ENCODE measurements at regions of chr1 and their contacts with region 1.

Region 1: DNA sequence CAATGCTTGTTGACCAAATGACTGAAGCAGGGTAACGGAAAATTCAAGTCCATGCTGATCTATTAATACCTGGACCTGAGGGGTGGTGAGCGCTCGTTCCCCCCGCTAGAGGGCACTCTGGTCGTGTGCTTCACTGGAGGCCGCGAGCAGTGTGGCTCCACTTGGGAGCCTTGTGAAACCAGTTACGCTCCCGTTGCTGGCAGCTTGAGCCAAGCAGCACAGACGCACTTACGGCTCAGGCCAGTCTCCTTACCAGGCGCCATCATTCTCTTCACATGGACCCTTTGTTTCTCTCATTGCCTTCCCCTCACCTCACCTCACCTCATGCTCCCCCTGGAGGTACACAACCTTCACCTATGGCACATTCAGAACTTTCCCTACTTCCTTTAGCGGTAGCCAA is 49.7 kb upstream of the TSPAN2 start:
- DNase-seq: peak; percentile 73
- ATAC-seq: peak; percentile 98
- H3K4me3 Mint-ChIP-seq: no peak overlapping the region
- H3K27ac Mint-ChIP-seq: no peak overlapping the region
- H3K4me1 Mint-ChIP-seq: peaks cover 3% of the 10 kb centered on the region
- H3K27me3 Mint-ChIP-seq: peaks cover 4% of the 10 kb centered on the region

Region 2: GRCh38 chr1:115469703-115470476 is 330.9 kb after region 1 on chr1:
- CTCF ChIA-PET with region 1: interaction called, 27 read pairs
- POLR2A ChIA-PET with region 1: no interaction called
- DNase-seq: peak; percentile 30
- ATAC-seq: no peak
- H3K4me3 Mint-ChIP-seq: no peak overlapping the region
- H3K27ac Mint-ChIP-seq: no peak overlapping the region
- H3K4me1 Mint-ChIP-seq: peaks cover 9% of the 10 kb centered on the region
- H3K27me3 Mint-ChIP-seq: no peaks in the 10 kb centered on the region

Region 3: DNA sequence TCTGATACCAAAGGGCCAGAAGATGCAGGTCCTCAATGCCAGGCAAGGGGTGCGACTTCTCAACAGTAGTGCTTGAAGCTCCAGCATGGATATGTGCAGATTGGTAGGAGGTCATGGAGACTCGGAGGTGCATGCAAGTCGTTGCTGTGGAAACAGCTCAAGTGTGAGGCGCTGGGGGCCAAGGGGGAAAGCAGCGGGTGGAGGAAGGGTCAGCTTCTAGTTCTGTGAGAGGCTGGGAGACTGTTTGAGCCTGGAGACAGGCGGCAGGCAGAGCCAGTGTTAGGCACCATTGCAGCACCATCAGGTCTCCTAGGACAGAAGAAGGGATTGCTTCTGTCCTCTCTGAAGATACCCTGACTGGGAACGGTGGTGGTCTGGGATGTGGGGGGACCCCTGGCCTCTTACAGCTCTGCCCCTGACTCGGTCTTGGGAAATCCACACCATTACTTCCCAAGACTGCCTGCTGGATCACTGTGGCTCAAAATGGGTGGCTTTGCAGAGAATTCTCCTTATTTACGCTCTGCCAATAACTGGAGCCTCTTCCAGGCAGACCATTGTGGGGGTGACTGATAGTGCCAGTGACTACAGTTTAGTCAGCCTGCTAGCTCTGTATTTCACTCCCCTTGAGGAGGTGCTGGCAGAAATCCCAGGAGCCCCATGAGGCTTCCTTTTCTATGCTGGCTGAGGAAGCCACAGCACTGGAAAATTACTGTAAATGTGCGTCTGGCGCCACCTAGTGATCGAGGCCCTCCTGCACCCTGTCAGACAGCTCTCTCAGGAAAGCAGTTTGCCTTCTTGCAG is 456.5 kb after region 1 on chr1:
- CTCF ChIA-PET with region 1: interaction called, 60 read pairs
- POLR2A ChIA-PET with region 1: no interaction called
- DNase-seq: peak; percentile 76
- ATAC-seq: no peak
- H3K4me3 Mint-ChIP-seq: no peak overlapping the region
- H3K27ac Mint-ChIP-seq: no peak overlapping the region
- H3K4me1 Mint-ChIP-seq: no peaks in the 10 kb centered on the region
- H3K27me3 Mint-ChIP-seq: no peaks in the 10 kb centered on the region